Endothelial cell of umbilical vein (primary cell): ENCODE measurements at regions of chrX and their contacts with region 1.

Region 1: DNA sequence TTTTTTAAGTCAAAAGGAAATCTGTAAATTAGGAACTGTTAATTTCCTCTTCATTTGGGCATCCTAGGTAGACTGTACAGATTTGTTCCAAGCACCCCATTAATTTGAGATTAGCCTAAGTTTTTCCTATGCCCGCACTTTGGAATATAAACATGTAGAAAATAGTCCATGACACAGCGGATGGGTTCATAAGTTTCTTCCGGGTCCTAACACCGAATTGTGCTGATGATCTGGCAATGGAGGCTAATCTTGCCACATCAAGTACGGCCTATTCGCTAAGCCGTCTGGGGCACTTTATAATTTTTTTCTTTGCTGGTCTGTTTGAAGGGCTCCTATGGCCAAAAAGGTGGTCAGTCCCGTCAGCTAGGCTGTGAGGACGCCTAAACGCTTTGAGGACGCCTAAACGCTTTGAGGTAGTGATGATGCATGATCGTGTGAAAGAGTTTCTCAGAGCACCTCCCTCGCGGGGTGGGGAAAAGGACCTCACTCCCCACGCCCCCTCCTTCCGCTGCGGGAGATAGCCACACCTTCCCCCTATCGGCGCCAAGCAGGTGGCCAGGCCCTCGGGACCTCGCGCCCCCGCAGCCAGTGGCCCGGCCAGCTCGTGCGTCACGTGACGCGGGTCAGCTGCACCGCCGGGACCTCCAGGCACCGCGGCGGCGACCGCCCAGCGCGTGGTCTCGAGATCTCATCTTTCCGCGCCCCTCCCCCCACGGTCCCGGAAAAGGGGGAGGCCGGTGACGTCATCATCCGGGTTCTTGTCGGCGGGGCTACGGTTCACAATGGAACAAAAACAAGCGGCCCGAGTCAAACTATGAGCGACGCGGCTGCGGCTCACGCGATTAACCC is 977 bp upstream of the USP9X start:
- DNase-seq: peak; percentile 97
- H3K4me3 ChIP-seq: peak overlapping the region in 2 of 3 experiments; percentile 67 to 70
- H3K27ac ChIP-seq: peak overlapping the region; percentile 100
- H3K4me1 ChIP-seq: peaks cover 16% of the 10 kb centered on the region
- H3K27me3 ChIP-seq: no peaks in the 10 kb centered on the region
- CTCF ChIP-seq: no peak
- POLR2A ChIP-seq: peak; percentile 78

Region 2: DNA sequence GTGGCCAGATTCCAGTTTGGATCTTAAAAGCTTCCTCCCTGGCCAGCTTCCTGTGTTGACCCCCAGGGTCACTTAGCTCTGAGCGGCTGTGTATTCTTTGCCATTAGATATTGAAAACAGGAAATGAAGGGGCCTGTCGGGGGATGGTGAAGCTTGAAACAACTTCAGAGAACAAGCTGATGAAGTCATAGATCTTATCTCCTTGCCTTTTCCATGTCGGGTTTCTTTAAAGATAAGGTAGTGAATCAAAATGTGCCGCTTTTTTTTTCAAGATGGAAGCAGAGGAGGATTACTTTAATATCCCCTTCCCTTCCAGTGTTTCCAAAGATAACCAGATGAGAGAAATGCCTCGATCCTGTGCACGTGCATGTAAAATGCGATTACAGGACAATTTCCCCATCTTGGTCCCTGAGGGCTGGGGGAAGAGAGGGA is 1774.5 kb before region 1 on chrX:
- CTCF ChIA-PET with region 1: no interaction called
- POLR2A ChIA-PET with region 1: no interaction called
- dilution Hi-C with region 1: no loop called
- intact Hi-C with region 1: no loop called
- DNase-seq: peak; percentile 92
- H3K4me3 ChIP-seq: peak overlapping the region in 1 of 3 experiments; percentile 20
- H3K27ac ChIP-seq: peak overlapping the region; percentile 84
- H3K4me1 ChIP-seq: peaks cover 37% of the 10 kb centered on the region
- H3K27me3 ChIP-seq: no peaks in the 10 kb centered on the region
- CTCF ChIP-seq: no peak
- POLR2A ChIP-seq: no peak

Region 3: DNA sequence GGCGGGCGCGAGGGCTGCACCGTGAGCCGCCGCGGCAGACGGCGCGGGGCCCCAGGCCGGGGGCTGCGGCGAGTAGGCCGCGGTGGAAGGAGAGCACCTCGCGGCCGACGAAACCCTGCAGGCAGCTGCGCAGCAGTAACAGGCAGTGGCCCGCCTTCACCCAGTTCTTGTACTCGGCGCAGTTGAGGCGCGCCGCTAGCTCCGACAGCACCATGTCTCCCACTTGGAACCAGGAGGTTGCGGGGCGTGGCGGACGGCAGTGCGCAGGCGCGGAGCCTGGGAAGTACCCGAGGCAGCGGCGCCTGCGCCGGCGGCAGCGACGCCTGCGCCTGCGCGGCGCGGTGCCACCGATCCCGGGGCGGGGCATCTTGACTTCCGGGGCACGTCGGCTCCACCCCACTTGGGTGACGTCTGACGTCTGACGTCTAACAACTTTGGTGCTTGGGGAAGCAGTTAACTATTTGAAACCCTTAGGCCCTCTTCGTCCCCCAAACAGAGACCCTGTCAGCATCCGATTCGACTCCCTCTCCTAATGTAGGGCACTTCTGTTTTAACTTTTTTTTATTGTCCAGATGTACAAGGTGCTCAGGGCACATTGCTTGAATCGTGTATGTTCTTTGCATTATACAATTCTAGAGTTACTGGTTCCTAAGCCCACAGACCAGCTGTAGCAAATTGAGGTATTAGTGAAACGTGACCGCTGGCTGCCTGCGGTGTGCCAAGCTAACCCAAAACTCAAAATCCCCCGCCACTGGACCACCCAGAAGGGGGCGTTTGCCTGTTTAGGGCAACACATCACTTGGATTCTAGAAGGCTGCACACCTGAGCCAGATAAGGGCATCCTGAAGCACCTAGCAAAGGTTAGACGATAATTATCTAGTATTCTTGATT is 436.7 kb before region 1 on chrX and contains the start of gene CXorf38:
- CTCF ChIA-PET with region 1: no interaction called
- POLR2A ChIA-PET with region 1: no interaction called
- dilution Hi-C with region 1: no loop called
- intact Hi-C with region 1: loop called (anchors 1 kb)
- DNase-seq: peak; percentile 90
- H3K4me3 ChIP-seq: peak within 1 kb of the TSS; percentile 78 to 82 (median 81)
- H3K27ac ChIP-seq: peak within 1 kb of the TSS; percentile 64
- H3K4me1 ChIP-seq: peaks cover 21% of the 10 kb centered on the region
- H3K27me3 ChIP-seq: no peaks in the 10 kb centered on the region
- CTCF ChIP-seq: no peak
- POLR2A ChIP-seq: peak; percentile 83
- total RNA-seq, gene CXorf38: 12.1 and 12.4 TPM in 2 replicates

Region 4: DNA sequence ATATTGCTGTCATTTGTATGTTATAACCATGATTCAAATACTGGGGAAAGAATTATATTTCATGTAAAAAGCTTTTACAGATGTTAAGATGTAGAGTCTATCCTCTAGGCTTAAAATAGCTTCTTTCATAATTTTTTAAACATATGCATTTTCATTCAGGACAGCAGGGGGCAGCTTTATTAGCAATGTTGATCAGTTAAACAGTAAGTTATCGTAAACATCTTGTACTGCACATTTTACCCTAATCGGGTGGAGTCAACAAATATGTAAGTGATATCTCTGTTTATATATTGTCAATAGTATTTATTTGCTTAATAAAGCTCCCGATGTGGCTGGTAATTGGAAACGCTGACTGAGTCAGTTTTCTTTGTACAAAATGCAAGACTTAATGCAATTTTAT is 206.4 kb before region 1 on chrX:
- CTCF ChIA-PET with region 1: interaction called, 6 read pairs
- POLR2A ChIA-PET with region 1: interaction called, 5 read pairs
- dilution Hi-C with region 1: no loop called
- intact Hi-C with region 1: loop called (anchors 10 kb)
- DNase-seq: peak; percentile 60
- H3K4me3 ChIP-seq: no peak overlapping the region
- H3K27ac ChIP-seq: no peak overlapping the region
- H3K4me1 ChIP-seq: peaks cover 3% of the 10 kb centered on the region
- H3K27me3 ChIP-seq: no peaks in the 10 kb centered on the region
- CTCF ChIP-seq: peak; percentile 8 to 20
- POLR2A ChIP-seq: no peak

Region 5: DNA sequence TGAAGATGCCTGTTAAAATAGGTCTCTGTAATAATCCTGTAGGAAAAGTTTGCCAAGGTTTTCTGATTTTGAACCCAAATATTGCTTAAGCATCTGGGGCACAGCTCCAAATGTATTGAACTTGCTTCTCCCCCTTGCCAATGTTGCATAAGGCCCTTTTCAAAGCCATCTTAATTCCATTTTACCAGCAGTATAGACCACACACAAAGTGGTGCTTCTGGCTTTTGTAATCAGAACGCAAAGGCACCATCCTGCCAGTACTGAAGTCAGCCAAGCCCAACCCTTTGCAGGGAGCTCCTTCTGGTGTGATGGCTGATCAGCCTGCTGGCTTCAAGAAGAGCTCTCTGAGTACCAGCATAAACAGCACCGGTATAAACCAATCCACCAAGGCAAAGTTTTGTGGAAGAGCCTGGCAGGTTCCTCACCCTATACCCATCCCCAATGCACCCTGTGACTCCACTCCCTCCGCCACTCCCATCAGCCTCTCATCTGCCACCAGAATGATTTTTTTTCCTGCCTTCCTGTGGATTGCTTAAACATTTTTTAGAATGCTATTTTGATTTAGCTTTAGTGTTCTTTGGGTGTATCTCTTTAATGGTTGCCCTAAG is 38.2 kb before region 1 on chrX:
- CTCF ChIA-PET with region 1: no interaction called
- POLR2A ChIA-PET with region 1: interaction called, 7 read pairs
- dilution Hi-C with region 1: no loop called
- intact Hi-C with region 1: loop called (anchors 5 kb)
- DNase-seq: peak; percentile 28
- H3K4me3 ChIP-seq: no peak overlapping the region
- H3K27ac ChIP-seq: no peak overlapping the region
- H3K4me1 ChIP-seq: peaks cover 15% of the 10 kb centered on the region
- H3K27me3 ChIP-seq: no peaks in the 10 kb centered on the region
- CTCF ChIP-seq: no peak
- POLR2A ChIP-seq: no peak

Region 6: DNA sequence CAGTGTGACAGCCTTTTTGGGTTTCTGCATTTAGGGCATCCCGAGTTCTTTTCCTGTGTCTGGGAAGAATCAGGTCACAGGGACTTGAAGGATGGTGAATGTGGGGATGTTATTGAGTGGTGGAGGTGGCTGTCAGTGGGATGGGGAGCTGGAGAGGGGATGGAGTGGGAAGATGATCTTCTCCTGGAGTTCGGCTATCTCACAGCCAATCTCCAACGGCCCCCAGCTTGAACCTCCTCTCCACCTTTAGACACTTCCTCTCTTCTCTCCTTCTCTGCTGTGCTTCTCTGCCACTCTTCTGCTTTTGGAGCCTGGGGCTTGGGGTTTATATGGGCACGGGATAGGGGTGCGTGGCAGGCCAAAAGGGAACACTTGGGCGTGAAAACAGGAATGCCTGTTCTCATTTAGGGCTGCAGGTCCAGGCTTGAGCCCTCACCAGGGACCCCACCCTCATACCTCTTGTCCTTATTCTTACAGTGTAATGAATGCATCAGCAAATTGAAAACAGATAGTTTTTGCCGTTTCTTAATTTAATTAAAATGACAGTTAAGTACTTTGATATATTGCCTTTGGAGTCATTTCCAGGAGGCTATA is 38.5 kb after region 1 on chrX:
- CTCF ChIA-PET with region 1: no interaction called
- POLR2A ChIA-PET with region 1: no interaction called
- dilution Hi-C with region 1: no loop called
- intact Hi-C with region 1: no loop called
- DNase-seq: no peak
- H3K4me3 ChIP-seq: no peak overlapping the region
- H3K27ac ChIP-seq: no peak overlapping the region
- H3K4me1 ChIP-seq: no peaks in the 10 kb centered on the region
- H3K27me3 ChIP-seq: no peaks in the 10 kb centered on the region
- CTCF ChIP-seq: no peak
- POLR2A ChIP-seq: no peak

Region 7: DNA sequence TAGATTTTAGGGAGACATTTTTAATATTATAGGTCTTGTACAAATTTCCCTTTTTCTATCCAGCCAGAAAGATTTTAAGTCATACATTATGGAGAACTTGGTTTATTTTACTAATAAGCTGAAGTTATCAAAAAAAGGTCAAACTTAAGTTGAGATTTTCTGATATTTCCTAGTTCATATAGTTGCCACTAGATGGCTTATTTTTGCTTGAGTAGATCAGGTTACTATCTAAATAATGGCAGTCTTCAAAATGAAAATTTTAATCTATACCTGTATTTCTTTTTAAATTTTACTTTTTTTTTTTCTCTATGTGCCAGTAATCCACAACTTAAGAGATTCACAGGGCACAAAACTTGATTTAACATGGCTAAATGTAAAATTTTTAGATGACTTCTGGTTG is 53.3 kb after region 1 on chrX:
- CTCF ChIA-PET with region 1: no interaction called
- POLR2A ChIA-PET with region 1: interaction called, 3 read pairs
- dilution Hi-C with region 1: no loop called
- intact Hi-C with region 1: loop called (anchors 1 kb)
- DNase-seq: no peak
- H3K4me3 ChIP-seq: no peak overlapping the region
- H3K27ac ChIP-seq: no peak overlapping the region
- H3K4me1 ChIP-seq: no peaks in the 10 kb centered on the region
- H3K27me3 ChIP-seq: no peaks in the 10 kb centered on the region
- CTCF ChIP-seq: no peak
- POLR2A ChIP-seq: no peak

Region 8: GRCh38 chrX:41333744-41334259 is 249.5 kb after region 1 on chrX and contains the start of gene DDX3X:
- CTCF ChIA-PET with region 1: no interaction called
- POLR2A ChIA-PET with region 1: no interaction called
- dilution Hi-C with region 1: no loop called
- intact Hi-C with region 1: loop called (anchors 10 kb)
- DNase-seq: peak; percentile 87
- H3K4me3 ChIP-seq: peak within 1 kb of the TSS; percentile 69 to 95 (median 87)
- H3K27ac ChIP-seq: peak within 1 kb of the TSS; percentile 96
- H3K4me1 ChIP-seq: peaks cover 13% of the 10 kb centered on the region
- H3K27me3 ChIP-seq: no peaks in the 10 kb centered on the region
- CTCF ChIP-seq: no peak
- POLR2A ChIP-seq: peak; percentile 99
- total RNA-seq, gene DDX3X: 300 and 304 TPM in 2 replicates

Region 9: GRCh38 chrX:41750716-41751115 is 666.4 kb after region 1 on chrX:
- CTCF ChIA-PET with region 1: no interaction called
- POLR2A ChIA-PET with region 1: no interaction called
- dilution Hi-C with region 1: no loop called
- intact Hi-C with region 1: no loop called
- DNase-seq: no peak
- H3K4me3 ChIP-seq: no peak overlapping the region
- H3K27ac ChIP-seq: no peak overlapping the region
- H3K4me1 ChIP-seq: no peaks in the 10 kb centered on the region
- H3K27me3 ChIP-seq: no peaks in the 10 kb centered on the region
- CTCF ChIP-seq: no peak
- POLR2A ChIP-seq: no peak